ENCODE measurements at regions of chr10 and their contacts with region 1.

Region 1: DNA sequence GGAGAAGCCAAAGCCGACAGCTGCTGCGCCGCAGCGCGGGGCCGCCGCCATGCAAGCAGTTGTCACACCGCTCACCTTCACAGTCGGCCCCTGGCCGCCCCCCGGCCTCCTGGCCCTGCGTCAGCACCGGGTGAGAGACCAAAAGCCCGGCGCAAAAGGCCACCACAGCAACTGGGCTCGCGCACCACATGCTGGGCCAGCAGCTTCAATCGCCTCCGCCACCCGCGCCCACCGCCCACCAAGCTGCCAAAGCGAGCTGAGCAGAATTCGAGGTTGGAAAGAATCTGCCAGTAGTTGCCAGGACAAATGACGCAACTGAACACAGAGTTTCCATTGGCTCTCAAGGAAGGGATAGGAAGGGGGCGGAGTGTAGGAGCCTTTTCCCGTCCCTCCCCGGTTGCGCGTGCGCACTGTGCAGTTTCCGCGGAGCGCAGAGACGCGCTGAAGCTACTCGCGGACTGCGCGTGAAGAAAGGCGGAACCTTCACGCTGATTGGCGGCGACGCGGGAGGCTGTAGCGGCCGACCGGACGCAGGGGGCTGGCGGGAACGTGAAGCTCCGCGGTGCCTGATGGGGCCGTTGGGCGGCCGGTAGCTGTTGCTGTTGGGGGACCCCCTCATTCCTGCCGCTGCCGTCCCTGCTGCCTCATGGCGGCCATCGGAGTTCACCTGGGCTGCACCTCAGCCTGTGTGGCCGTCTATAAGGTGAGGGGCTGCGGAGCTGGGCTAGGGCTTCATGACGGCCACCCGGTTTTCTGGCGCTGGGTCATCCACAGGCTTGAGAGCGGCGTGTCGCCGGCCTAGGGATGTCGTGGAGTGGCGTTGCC is at the starts of genes CDNF, HSPA14 and MSANTD7:
- DNase-seq: peak; percentile 97

Region 2: DNA sequence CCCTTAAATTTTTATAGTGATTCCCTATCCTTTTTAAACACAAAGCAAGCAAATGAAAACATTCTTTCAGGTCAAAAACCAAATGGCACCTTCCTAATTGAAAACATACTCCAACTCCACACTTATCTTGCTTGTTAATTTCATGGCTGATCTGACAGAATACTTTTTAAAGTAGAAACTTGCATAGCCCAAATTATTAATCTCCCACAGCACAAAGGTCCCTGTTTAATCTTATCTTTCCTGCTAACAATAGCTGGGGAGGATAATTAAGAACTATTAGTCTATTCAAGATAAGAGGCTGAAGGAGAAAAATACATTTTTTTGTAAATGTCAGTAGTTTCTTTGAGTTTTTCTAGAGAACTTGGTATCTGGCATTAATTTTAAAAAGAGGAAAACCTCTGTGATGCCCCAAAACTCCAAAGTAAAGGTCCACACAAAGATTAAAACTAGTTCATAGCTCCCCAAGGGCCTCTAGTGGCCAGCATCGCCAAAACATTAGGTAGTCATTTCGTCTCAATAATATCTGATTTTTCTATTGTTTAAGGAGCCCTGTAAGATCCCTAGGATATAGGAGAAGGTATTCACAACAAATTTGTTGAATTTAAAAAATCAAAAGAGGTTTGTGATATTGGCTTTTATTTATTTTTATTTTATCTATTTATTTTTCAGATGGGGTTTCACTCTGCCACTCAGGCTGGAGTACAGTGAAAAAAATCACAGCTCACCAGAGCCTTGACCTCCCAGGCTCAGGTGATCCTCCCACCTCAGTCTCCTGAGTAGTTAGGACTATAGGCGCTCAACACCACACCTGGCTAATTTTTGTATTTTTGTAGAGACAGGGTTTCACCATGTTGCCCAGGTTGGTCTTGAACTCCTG is 14.9 kb before region 1 on chr10:
- CTCF ChIA-PET with region 1: interaction called, 20 read pairs
- POLR2A ChIA-PET with region 1: interaction called, 21 read pairs
- DNase-seq: peak; percentile 33

Region 3: DNA sequence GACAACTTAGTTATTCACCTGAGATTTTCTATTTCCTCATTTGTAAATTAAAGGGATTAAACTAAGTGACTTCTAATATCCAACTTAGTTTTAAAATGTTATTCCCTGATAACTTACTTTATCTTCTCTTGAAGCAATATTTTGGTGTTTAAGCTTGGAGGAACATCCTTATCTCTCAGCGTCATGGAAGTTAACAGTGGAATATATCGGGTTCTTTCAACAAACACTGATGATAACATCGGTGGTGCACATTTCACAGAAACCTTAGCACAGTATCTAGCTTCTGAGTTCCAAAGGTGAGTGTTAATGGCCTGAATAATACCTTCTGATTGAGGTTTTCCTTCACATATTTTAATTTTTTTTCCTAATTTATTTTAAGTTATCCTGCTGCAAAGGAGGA is 14.3 kb after region 1 on chr10:
- CTCF ChIA-PET with region 1: interaction called, 4 read pairs
- POLR2A ChIA-PET with region 1: interaction called, 27 read pairs
- DNase-seq: no peak

Region 4: GRCh38 chr10:14878266-14879054 is 40.5 kb after region 1 on chr10 and contains the start of gene SUV39H2:
- CTCF ChIA-PET with region 1: no interaction called
- POLR2A ChIA-PET with region 1: interaction called, 41 read pairs
- DNase-seq: peak; percentile 97

Region 5: GRCh38 chr10:14954001-14954770 is 116.2 kb after region 1 on chr10 and contains the start of gene DCLRE1C:
- CTCF ChIA-PET with region 1: interaction called, 4 read pairs
- POLR2A ChIA-PET with region 1: interaction called, 30 read pairs
- DNase-seq: peak; percentile 88

Region 6: GRCh38 chr10:14959276-14960057 is 121.5 kb after region 1 on chr10 and contains the start of gene MEIG1:
- CTCF ChIA-PET with region 1: no interaction called
- POLR2A ChIA-PET with region 1: interaction called, 30 read pairs
- DNase-seq: peak; percentile 93